WTC11 (cell line): ENCODE measurements at regions of chr4 and their contacts with region 1.

Region 1: DNA sequence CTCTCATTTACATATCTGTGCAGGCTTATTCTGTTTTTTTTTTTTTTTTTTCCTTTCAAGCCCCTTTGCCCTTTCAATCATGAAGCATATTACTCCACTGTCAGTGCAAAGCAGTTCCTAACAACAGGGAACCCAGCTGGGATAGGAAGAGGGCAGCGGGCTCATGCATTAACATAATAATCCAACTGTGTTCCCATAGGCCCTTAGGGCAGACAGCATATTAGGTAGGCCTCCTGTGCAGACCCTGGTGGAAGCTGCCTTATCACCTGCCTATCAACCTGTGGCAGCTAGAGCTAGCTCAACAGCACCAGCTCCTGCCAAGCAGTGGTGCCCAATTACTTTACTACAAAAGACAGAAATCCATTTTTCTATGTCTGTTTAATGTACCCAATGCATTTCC is 49.3 kb downstream of the SLC10A7 start:
- DNase-seq: peak; percentile 30
- ATAC-seq: peak; percentile 100
- H3K4me3 Mint-ChIP-seq: no peak overlapping the region
- H3K27ac Mint-ChIP-seq: 0 out of 2 replicates have a peak overlapping the region, but pooled peaks have one; percentile 32
- H3K4me1 Mint-ChIP-seq: peaks cover 33% of the 10 kb centered on the region
- H3K27me3 Mint-ChIP-seq: no peaks in the 10 kb centered on the region
- CTCF ChIP-seq: no peak

Region 2: DNA sequence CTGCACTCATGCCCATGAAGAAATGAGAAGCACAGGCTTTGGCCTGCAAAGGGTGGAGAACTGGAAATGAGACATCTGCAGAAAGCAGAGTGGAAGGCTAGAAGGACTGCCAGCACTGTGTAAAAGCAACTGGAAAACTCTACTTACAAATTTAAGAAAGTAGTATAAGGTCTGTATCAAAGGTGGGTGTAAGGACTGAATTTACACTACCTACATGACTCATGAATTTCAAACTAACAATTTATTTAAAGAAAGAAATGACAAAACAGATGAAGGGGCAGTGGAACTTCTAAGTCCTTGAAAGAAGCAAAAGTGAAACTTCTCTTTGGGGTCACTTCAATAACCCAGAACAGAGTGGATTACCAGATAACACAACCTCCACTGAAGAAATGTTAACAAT is 21.9 kb before region 1 on chr4:
- CTCF ChIA-PET with region 1: no interaction called
- POLR2A ChIA-PET with region 1: interaction called, 10 read pairs
- DNase-seq: no peak
- ATAC-seq: no peak
- H3K4me3 Mint-ChIP-seq: no peak overlapping the region
- H3K27ac Mint-ChIP-seq: no peak overlapping the region
- H3K4me1 Mint-ChIP-seq: peaks cover 9% of the 10 kb centered on the region
- H3K27me3 Mint-ChIP-seq: no peaks in the 10 kb centered on the region
- CTCF ChIP-seq: no peak

Region 3: GRCh38 chr4:146585761-146586333 is 113.4 kb after region 1 on chr4:
- CTCF ChIA-PET with region 1: no interaction called
- POLR2A ChIA-PET with region 1: no interaction called
- DNase-seq: no peak
- ATAC-seq: no peak
- H3K4me3 Mint-ChIP-seq: no peak overlapping the region
- H3K27ac Mint-ChIP-seq: no peak overlapping the region
- H3K4me1 Mint-ChIP-seq: no peaks in the 10 kb centered on the region
- H3K27me3 Mint-ChIP-seq: no peaks in the 10 kb centered on the region
- CTCF ChIP-seq: no peak